ENCODE measurements at regions of chr12 and their contacts with region 1.

Region 1: GRCh38 chr12:122526683-122527477 is at the starts of genes KNTC1 and RSRC2:
- DNase-seq: peak; percentile 99
- H3K4me3 Mint-ChIP-seq: no peak within 1 kb of the TSS
- H3K27ac Mint-ChIP-seq: no peak within 1 kb of the TSS
- H3K4me1 Mint-ChIP-seq: peaks cover 36% of the 10 kb centered on the region
- H3K27me3 Mint-ChIP-seq: no peaks in the 10 kb centered on the region
- total RNA-seq, gene KNTC1: 128 and 129 TPM in 2 replicates
- total RNA-seq, gene RSRC2: 99.7 and 101 TPM in 2 replicates

Region 2: GRCh38 chr12:121802846-121803630 is 723.8 kb before region 1 on chr12:
- intact Hi-C with region 1: loop called (anchors 2 kb)
- DNase-seq: peak; percentile 96
- H3K4me3 Mint-ChIP-seq: peak overlapping the region; percentile 100
- H3K27ac Mint-ChIP-seq: peak overlapping the region; percentile 100
- H3K4me1 Mint-ChIP-seq: peaks cover 34% of the 10 kb centered on the region
- H3K27me3 Mint-ChIP-seq: no peaks in the 10 kb centered on the region

Region 3: DNA sequence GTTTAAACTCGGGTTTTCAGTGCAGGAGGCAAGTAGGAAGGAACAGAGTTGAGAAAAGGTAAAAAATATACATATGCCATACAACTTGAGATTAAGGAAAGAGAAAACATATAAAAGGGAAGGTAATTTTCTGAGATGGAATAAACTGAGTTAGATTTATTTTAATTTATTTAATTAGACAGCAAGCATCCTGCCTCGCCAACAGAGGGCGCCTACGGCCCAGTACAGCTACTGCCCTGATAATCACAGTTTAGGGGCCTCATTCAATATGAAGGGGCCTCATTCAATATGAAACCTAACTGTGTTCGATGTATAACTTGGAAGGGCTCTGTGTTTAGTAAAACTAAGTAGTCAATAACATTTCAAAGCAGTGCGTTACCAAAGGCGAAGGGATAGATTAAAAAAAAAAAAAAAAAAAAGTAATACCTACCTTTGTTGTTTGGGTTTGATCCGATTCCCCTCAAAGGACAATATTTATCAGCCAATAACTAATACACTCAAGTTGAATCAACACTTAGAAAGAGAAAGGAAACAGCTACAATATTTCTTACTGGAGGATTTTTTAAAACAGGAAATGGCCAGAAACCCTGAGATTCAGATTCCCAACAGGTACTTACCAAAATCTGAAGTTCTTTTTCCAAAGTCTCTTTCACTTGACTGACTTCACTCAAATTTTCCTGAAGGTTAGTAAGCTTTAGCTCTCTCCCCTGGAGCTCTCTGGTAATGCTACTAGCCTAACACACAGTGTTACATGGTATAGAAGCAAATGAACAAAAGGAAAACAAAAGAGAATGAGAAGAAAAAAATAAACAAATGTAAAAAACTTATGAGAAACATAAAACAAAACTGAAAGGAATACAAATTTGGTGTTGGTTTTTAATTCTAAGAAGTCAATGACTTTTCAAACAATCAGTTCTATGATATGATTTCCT is 190.6 kb before region 1 on chr12:
- intact Hi-C with region 1: no loop called
- DNase-seq: peak; percentile 77
- H3K4me3 Mint-ChIP-seq: no peak overlapping the region
- H3K27ac Mint-ChIP-seq: peak overlapping the region; percentile 63
- H3K4me1 Mint-ChIP-seq: peaks cover 12% of the 10 kb centered on the region
- H3K27me3 Mint-ChIP-seq: no peaks in the 10 kb centered on the region

Region 4: GRCh38 chr12:122350141-122350848 is 176.6 kb before region 1 on chr12:
- intact Hi-C with region 1: no loop called
- DNase-seq: no peak
- H3K4me3 Mint-ChIP-seq: no peak overlapping the region
- H3K27ac Mint-ChIP-seq: no peak overlapping the region
- H3K4me1 Mint-ChIP-seq: no peaks in the 10 kb centered on the region
- H3K27me3 Mint-ChIP-seq: no peaks in the 10 kb centered on the region

Region 5: GRCh38 chr12:122399592-122400373 is 127.1 kb before region 1 on chr12:
- intact Hi-C with region 1: loop called (anchors 5 kb)
- DNase-seq: peak; percentile 86
- H3K4me3 Mint-ChIP-seq: peak overlapping the region; percentile 71
- H3K27ac Mint-ChIP-seq: peak overlapping the region; percentile 87
- H3K4me1 Mint-ChIP-seq: peaks cover 34% of the 10 kb centered on the region
- H3K27me3 Mint-ChIP-seq: no peaks in the 10 kb centered on the region

Region 6: DNA sequence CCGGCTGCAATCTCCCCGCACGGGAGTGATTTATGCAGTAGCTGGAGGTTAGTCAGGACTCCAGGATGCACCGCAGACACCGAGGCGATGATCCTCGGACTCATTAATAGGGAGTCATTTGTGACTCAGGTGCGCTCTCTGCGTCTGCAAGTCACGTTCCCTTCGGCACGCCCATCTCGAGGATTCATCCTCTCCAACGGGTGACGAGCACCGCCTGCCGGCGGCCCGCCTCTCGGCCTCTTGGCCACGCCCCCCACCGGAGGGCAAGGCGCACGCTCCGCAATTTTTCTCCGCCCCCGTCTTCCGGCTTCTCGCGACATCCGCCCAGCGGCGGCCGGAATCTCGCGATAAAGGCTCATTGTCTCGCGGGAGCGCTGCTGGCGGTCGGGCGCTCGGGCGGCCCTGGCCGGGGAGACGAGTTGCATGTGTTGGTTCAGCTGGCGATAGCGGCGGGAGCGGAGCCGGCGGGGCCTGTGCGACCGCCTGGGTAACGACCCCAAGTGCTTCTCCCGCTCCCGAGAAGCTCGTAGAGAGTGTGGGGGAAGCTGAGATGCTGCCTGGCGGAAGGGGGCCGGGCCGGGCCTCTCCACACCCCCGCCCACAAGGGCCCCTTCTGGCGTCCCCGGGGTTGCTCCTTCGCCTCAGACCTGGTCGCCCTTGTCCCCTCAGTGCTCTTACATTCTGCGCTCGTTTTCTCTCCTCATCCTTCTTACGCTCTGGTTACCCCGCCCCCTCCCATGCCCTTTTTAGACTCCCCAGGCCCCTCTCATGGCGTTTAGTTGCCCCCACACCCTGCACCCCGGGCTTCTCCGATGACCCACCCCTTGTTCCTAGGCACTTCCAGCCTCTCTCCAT is 225.8 kb after region 1 on chr12 and contains the start of gene DENR:
- intact Hi-C with region 1: loop called (anchors 1 kb)
- DNase-seq: peak; percentile 100
- H3K4me3 Mint-ChIP-seq: peak within 1 kb of the TSS; percentile 93
- H3K27ac Mint-ChIP-seq: peak within 1 kb of the TSS; percentile 98
- H3K4me1 Mint-ChIP-seq: peaks cover 50% of the 10 kb centered on the region
- H3K27me3 Mint-ChIP-seq: no peaks in the 10 kb centered on the region
- total RNA-seq, gene DENR: 88.7 and 89.6 TPM in 2 replicates

Region 7: DNA sequence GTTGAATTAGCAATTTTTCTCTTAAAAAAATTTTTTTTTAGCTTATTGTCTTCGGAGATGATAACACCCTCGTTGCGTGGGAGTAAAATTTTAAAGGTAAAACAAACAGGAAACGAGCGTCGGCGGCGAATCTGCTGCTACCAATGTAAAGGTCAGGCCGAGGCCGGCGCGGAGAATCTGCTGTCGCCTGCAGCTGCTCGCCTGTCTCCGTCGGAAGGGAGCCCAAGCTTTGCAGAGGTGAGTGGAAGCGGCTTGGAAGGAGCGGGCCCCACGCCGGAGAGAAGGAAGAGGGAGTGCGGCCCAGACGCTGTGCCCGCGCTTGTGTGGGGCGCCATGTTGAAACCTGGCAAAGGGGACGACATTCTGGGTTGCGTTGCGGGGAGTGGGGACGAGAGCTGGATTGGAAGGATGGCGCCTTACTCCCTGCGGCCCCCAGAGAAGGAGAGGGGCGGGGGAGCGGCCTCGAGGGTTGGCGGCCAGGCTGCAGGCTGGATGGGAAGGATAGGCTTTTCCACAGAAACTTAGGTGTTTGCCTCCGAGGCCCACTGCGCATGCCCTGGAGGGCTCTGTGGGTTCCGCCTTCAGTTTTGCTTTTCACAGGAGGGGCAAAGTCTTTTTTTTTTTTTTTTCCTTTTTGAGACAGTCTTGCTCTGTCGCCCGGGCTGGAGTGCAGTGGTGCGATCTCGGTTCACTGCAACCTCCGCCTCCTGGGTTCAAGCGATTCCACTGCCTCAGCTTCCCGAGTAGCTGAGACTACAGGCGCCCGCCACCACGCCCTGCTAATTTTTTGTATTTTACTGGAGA is 931.3 kb after region 1 on chr12 and contains the start of gene SNRNP35:
- intact Hi-C with region 1: loop called (anchors 10 kb)
- DNase-seq: peak; percentile 95
- H3K4me3 Mint-ChIP-seq: peak within 1 kb of the TSS; percentile 100
- H3K27ac Mint-ChIP-seq: peak within 1 kb of the TSS; percentile 100
- H3K4me1 Mint-ChIP-seq: peaks cover 22% of the 10 kb centered on the region
- H3K27me3 Mint-ChIP-seq: no peaks in the 10 kb centered on the region
- total RNA-seq, gene SNRNP35: 30.6 and 33.4 TPM in 2 replicates

Measured in activated CD4-positive, alpha-beta T cell treated with anti-CD3 and anti-CD28 coated beads, Interleukin-2, amount 10 ng/mL, durations not matched to agents 24 days and 14 days (primary cell).